A673 (cell line): ENCODE measurements at regions of chr19 and their contacts with region 1.

Region 1: DNA sequence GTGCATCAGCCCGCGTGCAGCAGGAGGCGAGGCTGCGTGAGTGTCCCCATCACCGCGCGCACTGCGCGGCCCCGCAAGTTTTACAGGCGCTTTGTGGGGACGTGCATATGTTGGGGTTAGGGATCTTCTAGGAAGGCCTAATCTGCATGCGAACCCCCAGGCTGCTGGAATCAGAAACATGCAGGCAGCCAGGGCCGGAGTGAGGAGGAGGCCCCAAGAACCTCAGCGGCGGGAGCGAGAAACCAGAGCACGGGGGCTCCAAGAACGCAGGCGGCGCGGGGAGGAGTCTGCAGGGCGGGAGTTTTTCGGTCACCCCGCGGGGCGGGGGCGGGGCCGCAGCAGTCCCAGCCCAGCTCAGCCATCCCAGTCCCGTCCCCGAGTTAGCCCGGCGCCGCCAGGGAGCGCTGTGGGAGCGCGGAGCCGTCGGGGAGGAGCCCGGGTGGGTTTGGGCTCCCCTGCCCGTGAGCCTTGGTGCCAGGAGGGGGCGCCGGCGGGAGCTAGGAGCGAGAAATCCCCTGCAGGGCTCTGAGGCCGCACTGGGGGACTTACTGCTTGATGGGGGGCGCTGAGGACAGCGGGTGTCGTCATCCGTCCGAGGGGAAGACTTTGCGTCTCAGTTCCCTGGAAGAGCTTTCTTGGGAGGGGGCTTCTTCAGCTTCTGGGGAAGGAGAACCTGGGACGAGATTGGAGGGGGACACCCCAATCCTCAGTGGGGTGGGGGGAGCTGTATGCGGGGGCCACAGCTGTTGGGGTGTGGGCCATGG is 933 bp upstream of the NRTN start:
- DNase-seq: peak; percentile 97
- H3K4me3 ChIP-seq: peak overlapping the region; percentile 36
- H3K27ac ChIP-seq: peak overlapping the region; percentile 10
- H3K4me1 ChIP-seq: peaks cover 34% of the 10 kb centered on the region
- H3K27me3 ChIP-seq: no peaks in the 10 kb centered on the region
- CTCF ChIP-seq: peak; percentile 100

Region 2: DNA sequence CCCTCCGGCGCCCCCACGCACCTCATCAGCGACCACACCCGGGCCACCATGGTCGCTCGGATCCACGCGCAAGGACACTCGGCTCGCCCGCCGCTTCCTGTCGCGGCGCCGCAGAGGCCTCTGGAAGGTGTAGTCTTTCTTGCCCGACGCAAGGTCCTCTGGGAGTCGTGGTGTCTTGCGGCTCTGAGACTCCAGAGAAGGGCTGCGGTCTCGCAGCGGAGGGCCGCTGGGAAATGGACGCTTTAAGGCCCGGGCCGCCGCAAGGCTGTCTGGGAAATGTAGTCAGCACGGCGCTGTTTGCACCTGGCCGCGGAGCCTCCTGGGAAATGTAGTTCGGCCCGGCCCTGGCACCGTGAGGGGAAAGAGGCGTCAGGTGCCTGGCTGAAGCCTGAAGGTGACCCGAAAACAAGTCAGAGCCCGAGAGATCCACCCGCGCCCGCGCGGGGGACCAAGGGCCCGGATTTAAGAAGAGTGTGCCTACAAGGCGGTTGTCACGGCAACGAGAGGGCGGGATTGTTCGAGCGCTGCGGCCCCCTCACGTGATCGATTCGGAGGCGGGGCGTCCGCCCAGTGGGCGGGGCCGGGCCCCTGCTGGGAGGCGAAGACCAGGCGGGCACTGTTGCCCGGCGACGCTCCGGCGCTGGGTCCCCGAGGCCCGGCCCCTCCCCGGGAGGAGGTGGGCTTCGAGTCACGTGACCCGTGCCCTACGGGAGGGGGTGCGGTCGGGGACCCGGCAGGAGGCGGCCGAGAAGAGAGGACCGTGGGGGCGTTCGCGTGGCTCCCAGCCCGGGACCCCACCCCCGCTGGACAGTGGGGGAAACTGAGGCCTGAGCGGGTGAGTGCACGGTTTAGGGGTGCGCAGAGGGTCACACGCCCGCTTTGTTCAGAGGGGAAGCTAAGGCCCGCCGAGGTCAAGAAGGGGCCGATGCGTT is 123.2 kb before region 1 on chr19 and contains the starts of genes HSD11B1L and MICOS13:
- CTCF ChIA-PET with region 1: no interaction called
- POLR2A ChIA-PET with region 1: no interaction called
- intact Hi-C with region 1: no loop called
- DNase-seq: peak; percentile 100
- H3K4me3 ChIP-seq: peak within 1 kb of the TSS; percentile 91
- H3K27ac ChIP-seq: peak within 1 kb of the TSS; percentile 87
- H3K4me1 ChIP-seq: no peaks in the 10 kb centered on the region
- H3K27me3 ChIP-seq: no peaks in the 10 kb centered on the region
- CTCF ChIP-seq: no peak
- total RNA-seq, gene HSD11B1L: 5.7 and 8.2 TPM in 2 replicates
- total RNA-seq, gene MICOS13: 36.3 and 43.6 TPM in 2 replicates

Region 3: DNA sequence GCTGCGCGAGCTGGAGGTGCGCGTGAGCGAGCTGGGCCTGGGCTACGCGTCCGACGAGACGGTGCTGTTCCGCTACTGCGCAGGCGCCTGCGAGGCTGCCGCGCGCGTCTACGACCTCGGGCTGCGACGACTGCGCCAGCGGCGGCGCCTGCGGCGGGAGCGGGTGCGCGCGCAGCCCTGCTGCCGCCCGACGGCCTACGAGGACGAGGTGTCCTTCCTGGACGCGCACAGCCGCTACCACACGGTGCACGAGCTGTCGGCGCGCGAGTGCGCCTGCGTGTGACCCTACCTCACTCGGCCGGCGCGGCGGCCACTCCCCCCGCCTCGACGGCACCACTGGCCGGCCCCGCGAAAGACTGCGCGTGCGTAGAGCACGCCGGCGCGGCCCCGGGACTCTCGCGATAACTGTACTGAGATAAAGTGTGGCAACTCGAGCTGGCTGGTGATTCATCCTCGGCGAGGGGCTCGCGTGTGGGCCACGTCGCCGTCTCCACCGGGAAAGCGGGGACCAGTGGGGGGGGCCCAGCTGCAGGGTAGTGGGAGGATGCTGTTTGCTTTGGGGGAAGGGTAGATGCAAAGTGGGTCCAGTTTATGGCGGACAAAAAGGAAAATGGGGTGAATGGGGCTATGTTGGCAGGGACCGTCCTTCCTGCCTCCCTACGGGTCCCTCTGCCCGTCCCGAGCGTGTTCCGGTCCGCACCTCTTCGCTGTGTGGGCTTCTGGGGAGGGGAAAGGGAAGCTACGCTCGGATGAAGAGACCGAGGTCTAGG is 24.1 kb after region 1 on chr19:
- CTCF ChIA-PET with region 1: interaction called, 20 read pairs
- POLR2A ChIA-PET with region 1: no interaction called
- intact Hi-C with region 1: no loop called
- DNase-seq: peak; percentile 96
- H3K4me3 ChIP-seq: peak overlapping the region; percentile 61
- H3K27ac ChIP-seq: peak overlapping the region; percentile 89
- H3K4me1 ChIP-seq: peaks cover 22% of the 10 kb centered on the region
- H3K27me3 ChIP-seq: no peaks in the 10 kb centered on the region
- CTCF ChIP-seq: no peak

Region 4: DNA sequence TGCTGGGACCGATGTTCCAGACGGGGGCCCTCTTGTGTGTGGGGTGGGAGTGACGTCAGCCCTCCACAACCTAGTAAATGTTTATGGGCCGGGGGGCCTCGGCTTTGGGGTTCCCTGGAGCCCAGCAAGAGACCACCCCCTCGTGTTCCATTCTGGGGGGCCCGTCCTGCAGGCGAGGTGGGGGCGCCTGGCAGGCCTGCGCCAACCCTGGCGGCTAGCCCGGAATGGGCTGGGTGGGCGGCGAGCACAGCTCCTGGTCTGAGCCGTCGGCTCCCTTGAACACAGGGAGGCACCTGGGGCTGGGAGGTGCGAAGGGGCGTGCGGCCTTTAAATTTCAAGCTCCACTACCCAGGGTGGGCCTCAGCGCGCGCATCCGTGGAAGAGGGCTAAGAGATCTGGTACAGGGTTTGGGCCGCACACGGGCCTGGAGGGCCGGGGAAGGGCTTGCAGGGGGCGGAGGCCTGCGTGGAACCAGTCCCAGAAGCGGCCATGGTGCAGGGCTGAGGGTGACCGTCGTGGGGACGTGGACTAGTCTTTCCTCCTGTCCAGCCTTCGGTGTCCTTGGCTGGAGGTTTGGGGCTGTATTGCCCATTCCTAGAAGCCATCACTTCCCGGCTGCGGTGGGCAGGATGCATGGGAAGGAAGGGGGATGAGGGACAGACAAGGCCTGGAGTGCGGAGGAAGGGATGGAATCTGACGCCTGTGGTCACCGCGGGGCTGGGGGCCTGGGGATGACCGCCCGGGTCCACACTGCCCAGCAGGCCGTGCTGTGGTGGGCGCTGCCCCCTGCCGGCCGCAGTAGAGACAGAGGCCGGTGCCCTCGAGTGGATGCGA is 88.2 kb after region 1 on chr19:
- CTCF ChIA-PET with region 1: interaction called, 23 read pairs
- POLR2A ChIA-PET with region 1: no interaction called
- intact Hi-C with region 1: loop called (anchors 2 kb)
- DNase-seq: no peak
- H3K4me3 ChIP-seq: no peak overlapping the region
- H3K27ac ChIP-seq: no peak overlapping the region
- H3K4me1 ChIP-seq: peaks cover 16% of the 10 kb centered on the region
- H3K27me3 ChIP-seq: no peaks in the 10 kb centered on the region
- CTCF ChIP-seq: peak; percentile 76

Region 5: GRCh38 chr19:5904352-5905113 is 100.6 kb after region 1 on chr19 and contains the start of gene VMAC:
- CTCF ChIA-PET with region 1: interaction called, 16 read pairs
- POLR2A ChIA-PET with region 1: no interaction called
- intact Hi-C with region 1: no loop called
- DNase-seq: peak; percentile 100
- H3K4me3 ChIP-seq: peak within 1 kb of the TSS; percentile 95
- H3K27ac ChIP-seq: peak within 1 kb of the TSS; percentile 96
- H3K4me1 ChIP-seq: peaks cover 8% of the 10 kb centered on the region
- H3K27me3 ChIP-seq: no peaks in the 10 kb centered on the region
- CTCF ChIP-seq: no peak
- total RNA-seq, gene VMAC: 0.67 and 1.7 TPM in 2 replicates

Region 6: GRCh38 chr19:5967994-5968430 is 164.1 kb after region 1 on chr19:
- CTCF ChIA-PET with region 1: interaction called, 10 read pairs
- POLR2A ChIA-PET with region 1: no interaction called
- intact Hi-C with region 1: no loop called
- DNase-seq: peak; percentile 89
- H3K4me3 ChIP-seq: no peak overlapping the region
- H3K27ac ChIP-seq: peak overlapping the region; percentile 75
- H3K4me1 ChIP-seq: peaks cover 25% of the 10 kb centered on the region
- H3K27me3 ChIP-seq: no peaks in the 10 kb centered on the region
- CTCF ChIP-seq: peak; percentile 92

Region 7: GRCh38 chr19:6021878-6022569 is 218.1 kb after region 1 on chr19:
- CTCF ChIA-PET with region 1: interaction called, 27 read pairs
- POLR2A ChIA-PET with region 1: no interaction called
- intact Hi-C with region 1: loop called (anchors 2 kb)
- DNase-seq: peak; percentile 88
- H3K4me3 ChIP-seq: no peak overlapping the region
- H3K27ac ChIP-seq: no peak overlapping the region
- H3K4me1 ChIP-seq: no peaks in the 10 kb centered on the region
- H3K27me3 ChIP-seq: no peaks in the 10 kb centered on the region
- CTCF ChIP-seq: peak; percentile 85